ENCODE measurements at regions of chr11 and their contacts with region 1.

Region 1: DNA sequence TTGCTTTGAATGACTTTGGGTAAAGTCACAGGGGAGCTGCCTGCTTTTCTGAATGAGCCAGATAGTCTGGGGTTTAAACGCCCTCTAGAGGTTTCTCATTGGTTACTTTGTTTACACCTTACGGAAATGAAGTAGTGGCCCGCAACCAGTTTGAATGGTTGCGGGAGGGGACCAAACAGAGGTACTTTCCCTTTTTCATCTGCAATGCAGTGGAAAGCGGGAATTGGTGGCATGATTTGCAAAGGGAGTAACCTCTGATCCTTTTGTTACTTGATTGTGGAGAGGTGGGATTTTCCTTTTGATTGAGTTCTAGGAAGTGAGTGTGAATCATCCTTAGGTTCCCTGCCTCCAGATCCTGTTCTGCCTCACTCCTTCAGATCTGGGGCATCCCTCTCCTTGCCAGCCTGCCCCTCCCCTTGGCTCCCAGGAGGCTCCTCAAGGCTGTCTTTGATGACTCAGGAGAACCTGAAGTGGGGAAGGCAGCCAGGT is 15.9 kb upstream of the GLYATL1 start:
- DNase-seq: no peak
- H3K4me3 ChIP-seq: no peak overlapping the region
- H3K4me3 Mint-ChIP-seq: no peak overlapping the region
- H3K27ac Mint-ChIP-seq: peak overlapping the region; percentile 25
- H3K4me1 ChIP-seq: peaks cover 69% of the 10 kb centered on the region
- H3K4me1 Mint-ChIP-seq: peaks cover 48% of the 10 kb centered on the region
- H3K27me3 ChIP-seq: no peaks in the 10 kb centered on the region
- H3K27me3 Mint-ChIP-seq: no peaks in the 10 kb centered on the region
- CTCF ChIP-seq: peak in 1 of 2 experiments; percentile 23

Region 2: GRCh38 chr11:58945663-58946062 is 22.3 kb after region 1 on chr11:
- CTCF ChIA-PET with region 1: no interaction called
- POLR2A ChIA-PET with region 1: no interaction called
- intact Hi-C with region 1: loop called (anchors 1 kb)
- DNase-seq: no peak
- H3K4me3 ChIP-seq: no peak overlapping the region
- H3K4me3 Mint-ChIP-seq: no peak overlapping the region
- H3K27ac Mint-ChIP-seq: no peak overlapping the region
- H3K4me1 ChIP-seq: peaks cover 15% of the 10 kb centered on the region; the same call in 1 of the 2 replicates
- H3K4me1 Mint-ChIP-seq: peaks cover 10% of the 10 kb centered on the region
- H3K27me3 ChIP-seq: no peaks in the 10 kb centered on the region
- H3K27me3 Mint-ChIP-seq: no peaks in the 10 kb centered on the region
- CTCF ChIP-seq: no peak

Region 3: DNA sequence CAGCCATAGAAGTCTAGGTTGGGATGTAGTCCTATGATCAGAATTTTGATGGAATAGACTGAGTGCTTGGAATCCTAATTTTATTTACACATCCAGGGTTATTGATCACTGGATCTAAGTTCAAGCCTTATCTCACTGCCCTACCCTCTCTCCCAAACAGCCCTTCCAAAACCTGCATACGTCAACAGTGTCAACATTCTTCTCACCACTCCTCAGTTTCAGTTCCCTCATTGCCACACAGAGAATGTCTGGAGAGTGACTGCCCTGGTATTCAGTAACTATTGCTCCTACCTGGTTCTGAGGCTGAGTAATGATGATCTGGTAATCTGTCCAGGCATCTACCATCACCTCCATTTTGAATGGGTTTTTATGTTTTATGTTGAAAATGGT is 75.9 kb after region 1 on chr11:
- CTCF ChIA-PET with region 1: no interaction called
- POLR2A ChIA-PET with region 1: interaction called, 3 read pairs
- intact Hi-C with region 1: loop called (anchors 1 kb)
- DNase-seq: peak; percentile 70 to 72
- H3K4me3 ChIP-seq: no peak overlapping the region
- H3K4me3 Mint-ChIP-seq: peak overlapping the region; percentile 53
- H3K27ac Mint-ChIP-seq: peak overlapping the region; percentile 92
- H3K4me1 ChIP-seq: peaks cover 25% of the 10 kb centered on the region
- H3K4me1 Mint-ChIP-seq: peaks cover 18% of the 10 kb centered on the region
- H3K27me3 ChIP-seq: no peaks in the 10 kb centered on the region
- H3K27me3 Mint-ChIP-seq: no peaks in the 10 kb centered on the region
- CTCF ChIP-seq: no peak

Region 4: GRCh38 chr11:59142530-59143507 is 219.5 kb after region 1 on chr11 and contains the start of gene FAM111A:
- CTCF ChIA-PET with region 1: no interaction called
- POLR2A ChIA-PET with region 1: interaction called, 4 read pairs
- intact Hi-C with region 1: loop called (anchors 5 kb)
- DNase-seq: peak; percentile 92 to 95
- H3K4me3 ChIP-seq: peak within 1 kb of the TSS; percentile 55
- H3K4me3 Mint-ChIP-seq: peak within 1 kb of the TSS; percentile 98
- H3K27ac Mint-ChIP-seq: peak within 1 kb of the TSS; percentile 94
- H3K4me1 ChIP-seq: peaks cover 21% of the 10 kb centered on the region
- H3K4me1 Mint-ChIP-seq: peaks cover 45% of the 10 kb centered on the region
- H3K27me3 ChIP-seq: no peaks in the 10 kb centered on the region
- H3K27me3 Mint-ChIP-seq: no peaks in the 10 kb centered on the region
- CTCF ChIP-seq: peak in 1 of 2 experiments; percentile 75
- total RNA-seq, gene FAM111A: 76.1 and 78.8 TPM in 2 replicates

Measured in Caco-2 (cell line).